ENCODE measurements at regions of chr9 and their contacts with region 1.

Region 1: GRCh38 chr9:129482521-129483414 is 138.1 kb downstream of the C9orf50 start:
- H3K4me3 ChIP-seq: peak overlapping the region; percentile 29
- H3K27ac ChIP-seq: peak overlapping the region; percentile 87
- H3K4me1 ChIP-seq: no peaks in the 10 kb centered on the region; the same call in 1 of the 2 replicates
- CTCF ChIP-seq: no peak

Region 2: DNA sequence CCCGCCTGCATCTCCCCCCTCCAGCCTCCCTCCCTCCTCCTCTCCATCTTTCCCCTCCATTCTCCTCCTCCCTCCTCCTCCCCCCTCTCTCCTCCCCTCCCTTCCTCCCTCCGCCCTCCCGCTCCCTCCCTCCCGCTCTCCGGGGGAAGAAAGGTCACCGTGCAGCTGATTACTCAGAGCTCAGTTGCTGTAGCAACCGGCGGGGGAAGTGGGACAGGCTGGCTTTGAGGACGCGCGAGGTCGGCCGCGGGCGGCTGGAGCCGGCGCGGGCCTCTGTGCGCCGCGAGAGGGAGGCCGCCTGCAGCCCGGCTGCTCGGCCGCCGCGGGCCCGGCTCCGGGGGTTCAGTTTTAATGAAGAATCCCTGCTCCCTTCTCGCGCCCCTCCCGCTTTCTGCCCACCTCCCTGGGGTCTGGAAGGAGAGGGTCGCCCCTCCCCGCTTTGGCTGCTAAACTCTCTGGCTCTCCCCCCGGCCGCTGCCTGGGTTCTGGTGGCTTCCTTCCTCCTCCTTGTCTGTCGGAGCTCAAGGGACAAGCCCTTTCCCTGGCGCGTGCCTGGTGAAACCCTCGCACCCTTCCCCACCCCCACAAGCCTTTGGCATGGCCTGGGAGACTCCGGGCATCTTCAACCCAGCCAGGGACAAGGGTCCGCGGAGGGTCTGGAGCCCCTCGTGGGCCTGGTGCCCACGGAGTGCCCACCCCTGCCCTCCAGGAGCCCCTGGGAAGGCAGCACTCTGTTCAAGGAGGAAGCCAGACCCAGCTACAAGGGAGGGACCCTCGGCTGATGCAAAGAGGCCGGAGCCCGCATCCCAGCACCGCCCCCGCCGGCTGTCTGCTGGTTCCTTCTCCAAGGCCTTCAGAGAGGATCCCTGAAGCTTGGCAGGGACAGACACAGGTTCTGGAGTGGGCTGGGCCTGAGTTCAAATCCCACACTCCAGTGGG is 22.2 kb before region 1 on chr9:
- CTCF ChIA-PET with region 1: interaction called, 5 read pairs
- POLR2A ChIA-PET with region 1: interaction called, 30 read pairs
- H3K4me3 ChIP-seq: peak overlapping the region; percentile 36
- H3K27ac ChIP-seq: peak overlapping the region; percentile 88
- H3K4me1 ChIP-seq: peaks cover 20% of the 10 kb centered on the region
- CTCF ChIP-seq: no peak

Region 3: DNA sequence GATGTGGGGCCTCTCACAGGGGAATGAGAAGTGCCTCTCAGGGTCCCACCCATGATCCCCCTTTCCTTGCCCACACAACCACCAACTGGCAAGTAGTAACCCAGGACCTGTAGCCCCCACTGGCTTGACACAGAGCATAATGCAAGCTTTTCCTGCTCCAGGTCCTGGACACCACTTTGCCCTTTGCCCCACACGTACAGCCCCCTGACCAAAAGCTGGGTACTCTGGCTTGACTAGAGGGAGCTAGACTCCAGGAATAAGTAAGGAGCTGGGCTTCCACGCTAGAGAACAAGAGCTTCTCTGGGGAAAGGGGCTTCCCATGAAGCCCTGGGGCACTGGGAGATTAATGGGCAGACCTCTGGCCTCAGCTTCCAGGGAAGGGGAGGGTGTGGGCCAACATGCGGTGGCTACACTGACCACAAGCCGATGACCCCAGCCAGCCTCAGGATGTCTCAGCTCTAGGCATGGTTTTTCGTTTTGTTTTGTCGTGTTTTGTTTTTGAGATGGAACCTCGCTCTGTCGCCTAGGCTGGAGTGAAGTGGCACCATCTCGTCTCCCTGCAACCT is 28.6 kb after region 1 on chr9:
- CTCF ChIA-PET with region 1: no interaction called
- POLR2A ChIA-PET with region 1: no interaction called
- H3K4me3 ChIP-seq: no peak overlapping the region
- H3K27ac ChIP-seq: no peak overlapping the region
- H3K4me1 ChIP-seq: no peaks in the 10 kb centered on the region
- CTCF ChIP-seq: no peak

Region 4: DNA sequence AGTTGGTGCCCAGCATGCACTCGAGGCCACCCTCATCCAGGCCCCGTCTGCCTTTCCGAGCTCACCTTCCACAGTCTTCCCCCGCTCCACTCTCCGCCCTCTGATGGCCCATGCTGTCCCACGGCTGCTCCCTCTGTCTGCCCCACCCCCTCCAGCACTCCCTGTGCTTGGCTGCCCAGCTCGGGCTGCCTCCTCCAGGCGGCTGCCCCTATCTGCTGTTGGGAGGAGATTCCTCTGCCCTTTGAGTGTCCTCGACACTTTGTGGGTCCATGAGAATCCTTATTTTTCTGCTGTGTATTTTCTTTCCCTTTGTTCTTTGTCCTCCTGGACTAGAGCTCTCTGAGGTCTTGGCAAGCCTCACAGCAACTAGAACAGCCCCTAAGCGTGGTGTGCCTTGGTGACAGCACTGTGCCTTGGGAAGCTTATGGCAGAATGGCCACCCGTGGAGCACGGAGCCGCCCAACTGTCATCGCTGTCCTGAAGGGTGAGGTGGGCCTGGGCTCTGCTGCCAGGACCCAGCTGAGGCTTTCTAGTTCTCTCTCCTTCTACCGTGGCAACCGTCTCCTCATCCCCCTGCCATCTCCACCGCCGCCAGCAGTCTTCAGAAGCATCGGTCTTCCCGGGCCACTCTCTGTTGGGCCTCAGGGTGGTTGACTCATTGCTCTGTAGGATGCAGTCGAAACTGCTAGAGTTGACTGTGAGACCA is 148.4 kb after region 1 on chr9:
- CTCF ChIA-PET with region 1: no interaction called
- POLR2A ChIA-PET with region 1: no interaction called
- H3K4me3 ChIP-seq: no peak overlapping the region
- H3K27ac ChIP-seq: no peak overlapping the region
- H3K4me1 ChIP-seq: peaks cover 3% of the 10 kb centered on the region; the same call in 1 of the 2 replicates
- CTCF ChIP-seq: no peak